ENCODE measurements at regions of chr6 and their contacts with region 1.

Region 1: DNA sequence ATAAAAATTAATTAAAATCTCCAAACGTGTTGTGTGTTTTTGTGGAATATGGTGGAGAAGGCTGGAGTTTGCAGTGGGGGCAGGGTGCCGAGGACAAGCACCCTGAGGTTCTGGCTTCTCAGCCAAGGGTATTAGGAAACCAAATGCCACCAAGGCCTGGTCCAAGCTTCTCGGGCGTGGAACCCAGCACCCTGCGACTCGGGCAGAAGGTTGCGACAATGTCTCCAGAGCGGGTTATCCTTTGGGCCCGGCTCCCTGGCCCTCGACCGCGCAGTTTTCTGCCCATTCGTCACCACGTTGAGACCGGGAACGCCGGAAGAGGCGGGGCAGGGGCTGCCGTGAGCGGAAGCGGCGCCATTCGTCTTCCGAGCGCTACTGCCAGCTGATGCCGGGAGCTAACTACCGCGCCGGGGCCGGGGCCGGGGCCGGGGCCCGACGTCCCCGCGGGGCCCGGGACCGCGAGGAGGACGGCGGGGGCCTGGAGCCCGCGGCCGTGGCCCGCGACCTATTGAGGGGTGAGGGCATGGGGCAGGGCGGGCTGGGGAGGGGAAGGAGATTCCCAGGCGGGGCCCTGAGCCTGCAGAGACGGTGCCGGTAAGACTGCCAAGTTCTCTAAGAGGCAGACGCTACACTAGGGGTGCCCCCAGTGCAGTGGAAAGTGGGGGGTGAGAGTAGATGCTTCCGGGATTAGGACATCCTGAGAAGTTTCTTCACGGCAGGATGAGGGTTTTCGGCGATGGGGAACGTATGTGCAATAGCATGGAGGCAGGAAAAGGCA is at the start of gene RRP36:
- DNase-seq: peak; percentile 12 to 78 (median 56)
- ATAC-seq: peak; percentile 89 to 92 (median 90)
- H3K4me3 ChIP-seq: peak within 1 kb of the TSS; percentile 94 to 95
- H3K4me3 Mint-ChIP-seq: peak within 1 kb of the TSS; percentile 93 to 98 (median 96)
- H3K27ac ChIP-seq: peak within 1 kb of the TSS; percentile 54
- H3K27ac Mint-ChIP-seq: peak within 1 kb of the TSS; percentile 84 to 92
- H3K4me1 ChIP-seq: peaks cover 3 to 42% of the 10 kb centered on the region in 2 experiments
- H3K4me1 Mint-ChIP-seq: peaks cover 28 to 44% (median 40%) of the 10 kb centered on the region in 3 donors
- H3K27me3 ChIP-seq: no peaks in the 10 kb centered on the region
- H3K27me3 Mint-ChIP-seq: no peaks in the 10 kb centered on the region
- total RNA-seq, gene RRP36: 27.3 to 51.2 (median 47.3) TPM

Region 2: GRCh38 chr6:42748203-42748898 is 273.1 kb before region 1 on chr6:
- CTCF ChIA-PET with region 1: no interaction called
- POLR2A ChIA-PET with region 1: no interaction called
- DNase-seq: no peak
- ATAC-seq: no peak
- H3K4me3 ChIP-seq: no peak overlapping the region
- H3K4me3 Mint-ChIP-seq: peak overlapping the region; percentile 89 to 100 (median 100)
- H3K27ac ChIP-seq: peak overlapping the region; percentile 26
- H3K27ac Mint-ChIP-seq: peak overlapping the region; percentile 95 to 97
- H3K4me1 ChIP-seq: peaks cover 12 to 49% of the 10 kb centered on the region in 2 experiments
- H3K4me1 Mint-ChIP-seq: peaks cover 27 to 43% (median 42%) of the 10 kb centered on the region in 3 donors
- H3K27me3 ChIP-seq: peaks cover 0 to 2% of the 10 kb centered on the region in 2 experiments
- H3K27me3 Mint-ChIP-seq: no peaks in the 10 kb centered on the region

Region 3: DNA sequence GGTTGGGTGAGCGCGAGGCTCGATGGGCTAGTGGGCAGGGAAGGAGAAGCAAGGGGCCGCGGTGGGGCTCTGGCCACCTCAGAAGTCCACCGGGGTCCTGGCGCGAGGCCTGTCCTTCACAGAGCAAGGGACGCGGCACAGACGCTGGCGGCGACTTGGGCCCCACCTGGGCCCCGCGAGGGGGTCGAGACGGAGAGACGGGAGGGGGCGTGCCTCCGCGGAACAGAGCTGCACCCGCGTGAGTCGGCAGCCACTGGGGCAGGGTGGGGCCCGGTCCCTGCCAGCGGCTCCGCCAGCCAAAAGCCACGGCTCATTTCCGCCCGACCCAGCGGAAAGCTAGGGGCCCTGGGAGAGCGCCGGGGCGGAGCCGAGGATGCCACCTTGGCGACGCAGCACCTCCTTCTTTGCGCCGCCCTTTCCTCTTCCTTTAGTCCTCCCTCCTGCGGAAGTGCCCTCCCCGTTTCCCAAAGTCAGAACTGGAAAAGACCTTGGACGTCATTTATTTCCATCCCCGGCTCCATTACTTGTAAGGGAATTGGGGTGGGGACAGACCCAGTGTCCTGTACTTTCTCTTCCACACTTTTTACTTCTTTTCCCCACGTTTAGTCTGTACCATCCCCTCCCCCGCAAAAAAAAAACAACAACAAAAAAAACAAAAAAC is 32.2 kb after region 1 on chr6 and contains the start of gene CUL7:
- CTCF ChIA-PET with region 1: interaction called in 1 of 2 experiments, 11 read pairs
- POLR2A ChIA-PET with region 1: interaction called in 1 of 2 experiments, 5 read pairs
- DNase-seq: peak; percentile 76 to 93 (median 86)
- ATAC-seq: peak; percentile 99
- H3K4me3 ChIP-seq: peak within 1 kb of the TSS; percentile 73 to 87
- H3K4me3 Mint-ChIP-seq: peak within 1 kb of the TSS; percentile 87 to 94 (median 93)
- H3K27ac ChIP-seq: peak within 1 kb of the TSS; percentile 78
- H3K27ac Mint-ChIP-seq: peak within 1 kb of the TSS; percentile 93 to 95
- H3K4me1 ChIP-seq: peaks cover 5 to 43% of the 10 kb centered on the region in 2 experiments
- H3K4me1 Mint-ChIP-seq: peaks cover 47 to 52% (median 52%) of the 10 kb centered on the region in 3 donors
- H3K27me3 ChIP-seq: no peaks in the 10 kb centered on the region
- H3K27me3 Mint-ChIP-seq: no peaks in the 10 kb centered on the region
- total RNA-seq, gene CUL7: 6.9 to 15.9 (median 11.6) TPM